ENCODE measurements at regions of chr6 and their contacts with region 1.

Region 1: GRCh38 chr6:139375232-139376016 is 976 bp upstream of the CITED2 start:
- DNase-seq: peak; percentile 92 to 97 (median 95)
- H3K4me3 ChIP-seq: peak overlapping the region; percentile 21 to 97 (median 95)
- H3K27ac ChIP-seq: peak overlapping the region; percentile 78 to 98 (median 98)
- H3K4me1 ChIP-seq: peaks cover 9 to 22% of the 10 kb centered on the region in 2 donors
- H3K27me3 ChIP-seq: no peaks in the 10 kb centered on the region
- CTCF ChIP-seq: peak in 2 of 6 experiments; percentile 9 to 25
- POLR2A ChIP-seq: peak; percentile 78 to 94

Region 2: DNA sequence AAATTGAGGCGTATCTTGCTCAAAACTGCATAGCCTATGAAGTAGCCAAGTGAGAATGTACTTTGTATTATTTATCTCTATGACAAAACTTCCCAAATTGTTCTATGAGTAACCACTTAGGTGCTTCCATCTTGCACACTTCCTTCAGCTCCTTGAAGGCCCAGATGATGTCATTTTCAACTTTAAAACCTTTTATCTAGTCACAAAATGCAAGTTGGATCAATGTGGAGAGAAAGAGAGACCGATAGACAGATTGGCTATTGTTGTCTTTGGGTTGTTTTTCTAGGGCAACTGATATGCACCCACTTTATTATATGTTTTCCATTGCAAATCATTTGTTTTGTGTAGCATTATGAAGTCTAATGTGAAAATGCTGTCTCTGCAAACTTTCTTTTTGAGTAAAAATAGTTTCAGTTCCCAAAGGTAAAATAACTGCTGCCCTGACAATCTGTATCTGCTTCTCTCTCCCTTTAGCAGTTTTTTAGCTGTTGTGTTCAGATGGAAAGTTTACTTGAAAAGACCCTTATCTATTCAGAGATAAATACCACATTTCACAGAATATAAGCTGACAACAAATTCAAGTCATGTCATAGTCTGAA is 72.7 kb after region 1 on chr6:
- intact Hi-C with region 1: no loop called
- DNase-seq: no peak
- H3K4me3 ChIP-seq: no peak overlapping the region
- H3K27ac ChIP-seq: peak overlapping the region in 2 of 5 donors; percentile 3 to 11
- H3K4me1 ChIP-seq: peaks cover 12 to 26% of the 10 kb centered on the region in 2 donors
- H3K27me3 ChIP-seq: no peaks in the 10 kb centered on the region
- CTCF ChIP-seq: no peak
- POLR2A ChIP-seq: no peak

Region 3: DNA sequence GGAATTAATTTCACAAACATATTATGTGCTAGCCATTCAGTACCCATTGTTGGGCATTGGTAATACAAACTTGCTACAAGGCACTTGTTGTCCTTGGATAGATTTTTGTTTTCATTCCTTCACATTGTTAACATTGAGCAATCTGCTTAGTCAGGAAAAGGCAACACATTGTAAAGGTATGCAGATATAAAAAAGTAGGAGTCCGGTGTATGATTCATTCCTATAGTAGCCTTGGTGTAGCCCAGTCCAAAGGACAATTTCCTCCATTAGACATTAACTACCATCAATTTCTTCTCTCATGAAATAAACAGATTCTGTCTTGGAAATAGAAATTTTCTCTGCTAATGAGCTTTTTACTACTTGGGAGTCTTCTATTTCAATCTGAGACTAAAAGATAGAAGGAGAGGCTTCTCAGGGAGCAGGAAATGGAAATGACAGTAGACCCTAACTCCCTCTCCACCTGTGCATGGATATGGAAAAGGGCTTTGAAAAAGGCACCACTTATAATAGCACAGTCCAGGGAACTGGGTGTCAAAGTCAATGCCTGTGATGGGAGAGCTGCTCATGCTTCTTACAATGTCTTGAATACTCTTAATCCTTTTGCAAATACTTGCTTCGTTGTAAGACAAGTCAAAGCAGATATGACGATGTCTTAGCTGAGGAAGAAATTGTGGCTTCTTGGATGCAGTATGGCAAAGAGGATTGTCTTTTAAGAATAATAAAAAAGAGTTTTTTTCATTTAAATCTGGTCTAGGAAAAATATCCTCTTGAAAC is 368.4 kb after region 1 on chr6:
- intact Hi-C with region 1: loop called in 1 of 2 experiments (anchors 10 kb)
- DNase-seq: no peak
- H3K4me3 ChIP-seq: no peak overlapping the region
- H3K27ac ChIP-seq: peak overlapping the region in 2 of 5 donors; percentile 14 to 55
- H3K4me1 ChIP-seq: peaks cover 22 to 35% of the 10 kb centered on the region in 2 donors
- H3K27me3 ChIP-seq: no peaks in the 10 kb centered on the region
- CTCF ChIP-seq: no peak
- POLR2A ChIP-seq: no peak

Region 4: GRCh38 chr6:139757784-139758183 is 382.4 kb after region 1 on chr6:
- intact Hi-C with region 1: loop called in 1 of 2 experiments (anchors 5 kb)
- DNase-seq: no peak
- H3K4me3 ChIP-seq: no peak overlapping the region
- H3K27ac ChIP-seq: peak overlapping the region in 1 of 5 donors; percentile 23
- H3K4me1 ChIP-seq: peaks cover 19 to 24% of the 10 kb centered on the region in 2 donors
- H3K27me3 ChIP-seq: no peaks in the 10 kb centered on the region
- CTCF ChIP-seq: no peak
- POLR2A ChIP-seq: no peak

Region 5: GRCh38 chr6:139881728-139882211 is 506.3 kb after region 1 on chr6:
- intact Hi-C with region 1: loop called in 1 of 2 experiments (anchors 10 kb)
- DNase-seq: peak; percentile 19 to 61 (median 35)
- H3K4me3 ChIP-seq: peak overlapping the region in 1 of 4 donors; percentile 11
- H3K27ac ChIP-seq: peak overlapping the region in 3 of 5 donors; percentile 28 to 77 (median 61)
- H3K4me1 ChIP-seq: peaks cover 19 to 21% of the 10 kb centered on the region in 2 donors
- H3K27me3 ChIP-seq: no peaks in the 10 kb centered on the region
- CTCF ChIP-seq: peak; percentile 35 to 71 (median 62)
- POLR2A ChIP-seq: no peak

Region 6: GRCh38 chr6:140078561-140079125 is 703.2 kb after region 1 on chr6:
- intact Hi-C with region 1: loop called in 1 of 2 experiments (anchors 10 kb)
- DNase-seq: peak in 3 of 7 donors; percentile 8 to 16 (median 15)
- H3K4me3 ChIP-seq: peak overlapping the region in 1 of 4 donors; percentile 30
- H3K27ac ChIP-seq: peak overlapping the region; percentile 58 to 89 (median 78)
- H3K4me1 ChIP-seq: peaks cover 21 to 46% of the 10 kb centered on the region in 2 donors
- H3K27me3 ChIP-seq: no peaks in the 10 kb centered on the region
- CTCF ChIP-seq: no peak
- POLR2A ChIP-seq: no peak

Region 7: DNA sequence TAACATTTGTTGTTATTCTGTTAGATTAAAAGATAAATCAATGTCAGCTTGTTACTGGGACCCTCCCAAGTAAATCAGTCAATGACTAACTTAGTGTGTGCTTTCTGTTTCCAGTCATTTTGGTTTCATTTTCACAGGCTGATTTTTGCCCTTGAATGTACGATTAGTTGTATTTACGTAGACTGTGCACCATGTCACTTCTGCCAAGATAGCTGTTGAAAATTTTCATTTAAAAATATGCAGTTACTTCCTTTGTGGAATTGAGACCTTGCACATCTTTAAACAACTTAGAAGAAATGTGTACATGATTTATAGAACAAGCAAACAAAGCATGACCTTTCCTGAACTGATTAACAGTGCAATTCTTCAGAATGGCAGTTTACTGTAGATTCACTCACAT is 943.8 kb after region 1 on chr6:
- intact Hi-C with region 1: loop called in 1 of 2 experiments (anchors 10 kb)
- DNase-seq: peak in 1 of 7 donors; percentile 10
- H3K4me3 ChIP-seq: peak overlapping the region in 1 of 4 donors; percentile 44
- H3K27ac ChIP-seq: peak overlapping the region in 3 of 5 donors; percentile 10 to 57 (median 53)
- H3K4me1 ChIP-seq: peaks cover 12 to 29% of the 10 kb centered on the region in 2 donors
- H3K27me3 ChIP-seq: no peaks in the 10 kb centered on the region
- CTCF ChIP-seq: no peak
- POLR2A ChIP-seq: no peak

Measured in adrenal gland (tissue), 19 donors.